ENCODE measurements at regions of chr5 and their contacts with region 1.

Region 1: GRCh38 chr5:57221049-57221568 is 47.2 kb downstream of the GPBP1 start:
- DNase-seq: peak; percentile 70
- H3K4me3 Mint-ChIP-seq: no peak overlapping the region
- H3K27ac Mint-ChIP-seq: peak overlapping the region; percentile 42
- H3K4me1 Mint-ChIP-seq: peaks cover 15% of the 10 kb centered on the region
- H3K27me3 Mint-ChIP-seq: no peaks in the 10 kb centered on the region
- CTCF ChIP-seq: peak; percentile 81

Region 2: DNA sequence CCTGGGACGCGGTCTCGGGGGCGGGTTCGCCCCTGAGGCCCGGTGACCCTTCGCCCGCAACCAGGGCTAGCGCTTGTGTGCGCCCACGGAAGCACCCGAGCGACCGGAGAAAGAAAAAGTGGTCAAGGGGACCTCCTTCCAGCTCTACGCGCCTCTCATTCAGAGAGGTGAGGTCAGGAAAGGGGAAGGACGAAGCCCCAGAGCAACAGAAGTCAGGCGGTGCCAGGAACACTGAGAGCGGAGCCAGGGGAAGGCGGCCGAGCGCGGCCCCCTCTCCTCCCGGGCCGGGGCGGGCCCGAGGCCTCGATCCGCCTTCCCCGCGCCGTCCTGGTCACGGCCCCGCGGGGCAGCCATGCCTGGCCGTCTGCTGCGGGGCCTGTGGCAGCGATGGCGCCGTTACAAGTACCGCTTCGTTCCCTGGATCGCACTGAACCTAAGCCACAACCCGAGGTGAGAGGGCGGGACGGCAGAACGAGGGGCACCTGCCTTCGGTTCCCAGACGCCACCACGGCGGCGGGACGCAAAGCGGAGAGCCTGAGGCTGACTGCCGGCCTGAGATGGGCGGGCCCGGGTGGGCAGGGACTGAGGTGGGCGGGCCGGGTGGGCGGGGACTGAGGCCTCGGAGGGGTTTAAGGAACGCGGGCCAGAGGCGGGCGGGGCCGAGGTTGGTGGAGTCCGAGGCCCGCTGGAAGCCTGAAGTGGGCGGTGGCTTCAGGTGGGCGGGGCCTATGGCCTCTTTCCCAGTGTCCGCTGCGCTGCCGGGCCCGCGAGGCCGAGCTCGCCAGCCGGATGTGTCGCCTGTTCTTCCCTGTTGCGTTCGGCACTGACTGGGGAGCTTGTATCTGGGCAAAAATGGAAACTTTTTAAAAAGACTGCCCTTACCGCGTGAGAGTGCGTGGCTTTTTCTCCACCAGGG is 311.6 kb before region 1 on chr5 and contains the start of gene SETD9:
- CTCF ChIA-PET with region 1: interaction called, 3 read pairs
- POLR2A ChIA-PET with region 1: interaction called, 16 read pairs
- intact Hi-C with region 1: loop called (anchors 1 kb)
- DNase-seq: peak; percentile 97
- H3K4me3 Mint-ChIP-seq: peak within 1 kb of the TSS; percentile 99
- H3K27ac Mint-ChIP-seq: peak within 1 kb of the TSS; percentile 99
- H3K4me1 Mint-ChIP-seq: peaks cover 8% of the 10 kb centered on the region
- H3K27me3 Mint-ChIP-seq: no peaks in the 10 kb centered on the region
- CTCF ChIP-seq: no peak
- total RNA-seq, gene SETD9: 10.6 and 11.5 TPM in 2 replicates

Region 3: GRCh38 chr5:57082441-57083067 is 138.6 kb before region 1 on chr5:
- CTCF ChIA-PET with region 1: interaction called, 3 read pairs
- POLR2A ChIA-PET with region 1: interaction called, 3 read pairs
- intact Hi-C with region 1: loop called (anchors 2 kb)
- DNase-seq: peak; percentile 42
- H3K4me3 Mint-ChIP-seq: no peak overlapping the region
- H3K27ac Mint-ChIP-seq: no peak overlapping the region
- H3K4me1 Mint-ChIP-seq: no peaks in the 10 kb centered on the region
- H3K27me3 Mint-ChIP-seq: no peaks in the 10 kb centered on the region
- CTCF ChIP-seq: peak; percentile 44

Region 4: GRCh38 chr5:57207681-57208080 is 13.4 kb before region 1 on chr5:
- CTCF ChIA-PET with region 1: interaction called, 10 read pairs
- POLR2A ChIA-PET with region 1: interaction called, 26 read pairs
- intact Hi-C with region 1: no loop called
- DNase-seq: no peak
- H3K4me3 Mint-ChIP-seq: no peak overlapping the region
- H3K27ac Mint-ChIP-seq: no peak overlapping the region
- H3K4me1 Mint-ChIP-seq: peaks cover 21% of the 10 kb centered on the region
- H3K27me3 Mint-ChIP-seq: no peaks in the 10 kb centered on the region
- CTCF ChIP-seq: no peak

Measured in MCF 10A (cell line).